CD4-positive, alpha-beta T cell (primary cell): ENCODE measurements at regions of chr11 and their contacts with region 1.

Region 1: DNA sequence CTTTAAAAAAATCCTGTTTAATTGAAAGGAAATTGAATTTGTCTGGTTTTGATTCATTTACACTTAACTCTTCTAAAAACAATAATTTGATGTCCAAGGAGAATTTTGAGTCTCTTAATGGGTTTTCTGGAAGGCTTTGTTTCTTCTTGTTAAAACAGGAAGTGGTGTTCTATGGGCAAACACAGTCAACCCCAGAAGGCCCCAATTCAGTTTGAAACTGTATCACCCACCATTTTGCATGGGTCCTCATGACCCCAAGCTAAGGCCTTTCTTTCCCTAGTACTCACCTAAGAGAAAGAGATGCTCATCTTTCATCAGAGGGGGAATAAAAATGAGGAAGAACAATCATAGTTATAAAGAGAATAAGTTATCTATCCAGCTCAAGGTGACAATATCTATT is 10.6 kb downstream of the FLI1 start:
- DNase-seq: no peak
- ATAC-seq: no peak
- H3K4me3 ChIP-seq: no peak overlapping the region
- H3K4me3 Mint-ChIP-seq: peak overlapping the region; percentile 62
- H3K27ac ChIP-seq: no peak overlapping the region
- H3K27ac Mint-ChIP-seq: peak overlapping the region; percentile 67
- H3K4me1 ChIP-seq: peaks cover 80% of the 10 kb centered on the region
- H3K4me1 Mint-ChIP-seq: peaks cover 99% of the 10 kb centered on the region
- H3K27me3 ChIP-seq: no peaks in the 10 kb centered on the region
- H3K27me3 Mint-ChIP-seq: no peaks in the 10 kb centered on the region
- CTCF ChIP-seq: no peak

Region 2: DNA sequence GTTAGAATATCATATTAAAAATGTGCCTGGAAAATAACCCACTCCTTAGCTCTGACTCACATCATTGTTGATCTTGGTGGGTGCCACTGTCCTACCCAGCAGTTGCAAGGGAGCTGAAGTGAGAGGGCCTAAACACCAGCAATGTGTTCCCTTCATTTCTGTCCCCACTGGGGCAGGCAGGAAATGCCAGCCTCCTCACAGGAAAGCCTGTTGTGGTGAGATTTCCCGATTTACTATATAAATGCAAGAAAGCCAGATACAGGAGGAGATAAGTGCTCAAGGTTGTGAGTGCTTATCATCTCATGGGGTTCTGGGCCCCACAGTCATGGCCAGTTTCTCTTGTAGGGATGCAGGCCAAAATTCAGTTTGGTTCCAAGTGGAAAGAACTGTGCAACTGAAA is 26.5 kb before region 1 on chr11:
- CTCF ChIA-PET with region 1: no interaction called
- POLR2A ChIA-PET with region 1: no interaction called
- intact Hi-C with region 1: no loop called
- DNase-seq: no peak
- ATAC-seq: no peak
- H3K4me3 ChIP-seq: no peak overlapping the region
- H3K4me3 Mint-ChIP-seq: no peak overlapping the region
- H3K27ac ChIP-seq: no peak overlapping the region
- H3K27ac Mint-ChIP-seq: no peak overlapping the region
- H3K4me1 ChIP-seq: peaks cover 12% of the 10 kb centered on the region
- H3K4me1 Mint-ChIP-seq: peaks cover 22% of the 10 kb centered on the region
- H3K27me3 ChIP-seq: no peaks in the 10 kb centered on the region
- H3K27me3 Mint-ChIP-seq: peaks cover 2% of the 10 kb centered on the region
- CTCF ChIP-seq: no peak

Region 3: GRCh38 chr11:128725630-128726319 is 21.3 kb after region 1 on chr11:
- CTCF ChIA-PET with region 1: no interaction called
- POLR2A ChIA-PET with region 1: interaction called, 14 read pairs
- intact Hi-C with region 1: loop called in 1 of 2 experiments (anchors 2 kb)
- DNase-seq: peak in 12 of 14 experiments; percentile 27 to 92 (median 50)
- ATAC-seq: peak; percentile 61
- H3K4me3 ChIP-seq: peak overlapping the region; percentile 33
- H3K4me3 Mint-ChIP-seq: peak overlapping the region; percentile 80
- H3K27ac ChIP-seq: peak overlapping the region; percentile 4 to 63
- H3K27ac Mint-ChIP-seq: peak overlapping the region; percentile 90
- H3K4me1 ChIP-seq: peaks cover 100% of the 10 kb centered on the region
- H3K4me1 Mint-ChIP-seq: peaks cover 99% of the 10 kb centered on the region
- H3K27me3 ChIP-seq: no peaks in the 10 kb centered on the region
- H3K27me3 Mint-ChIP-seq: peaks cover 5% of the 10 kb centered on the region
- CTCF ChIP-seq: no peak

Region 4: DNA sequence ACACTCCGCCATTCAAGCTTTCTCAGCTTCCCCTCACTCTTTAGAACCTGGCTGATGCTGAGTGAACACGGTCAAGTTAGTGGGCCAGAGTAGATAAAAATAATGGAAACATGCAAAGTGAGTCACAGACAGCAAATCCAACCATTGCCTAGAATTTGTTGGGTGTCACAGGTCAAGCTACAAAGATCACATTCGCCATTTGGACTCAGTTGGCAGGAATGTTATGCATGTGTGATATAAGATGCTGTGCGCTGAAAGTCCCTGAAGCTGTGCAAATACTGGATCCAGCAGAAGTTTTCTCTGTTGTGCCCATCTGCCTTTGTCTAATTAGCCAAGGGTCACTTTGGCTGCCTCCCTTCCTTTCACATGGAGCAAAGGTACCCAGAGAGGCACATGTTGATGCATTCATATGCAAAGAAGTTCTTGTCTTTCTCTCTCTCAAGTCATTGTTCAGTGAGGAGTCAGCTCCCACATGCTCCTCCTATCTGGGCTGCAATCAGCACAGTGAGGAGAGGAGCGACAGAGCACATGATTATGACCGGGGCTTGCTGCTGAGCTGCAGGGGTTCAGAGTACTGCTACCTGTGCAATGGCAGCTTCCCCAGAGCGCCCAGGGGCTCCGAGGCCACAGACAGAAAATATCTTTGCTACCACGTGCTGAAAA is 29.1 kb after region 1 on chr11:
- CTCF ChIA-PET with region 1: no interaction called
- POLR2A ChIA-PET with region 1: interaction called, 4 read pairs
- intact Hi-C with region 1: loop called (anchors 2 to 5 kb)
- DNase-seq: peak in 7 of 14 experiments; percentile 22 to 60 (median 45)
- ATAC-seq: peak; percentile 52
- H3K4me3 ChIP-seq: peak overlapping the region; percentile 6
- H3K4me3 Mint-ChIP-seq: peak overlapping the region; percentile 76
- H3K27ac ChIP-seq: no peak overlapping the region
- H3K27ac Mint-ChIP-seq: peak overlapping the region; percentile 90
- H3K4me1 ChIP-seq: peaks cover 98% of the 10 kb centered on the region
- H3K4me1 Mint-ChIP-seq: peaks cover 98% of the 10 kb centered on the region
- H3K27me3 ChIP-seq: no peaks in the 10 kb centered on the region
- H3K27me3 Mint-ChIP-seq: no peaks in the 10 kb centered on the region
- CTCF ChIP-seq: no peak